GM13977 (cell line): ENCODE measurements at regions of chr2 and their contacts with region 1.

Region 1: GRCh38 chr2:182077451-182078142 is 91.9 kb downstream of the PPP1R1C start:
- DNase-seq: peak; percentile 23
- CTCF ChIP-seq: peak; percentile 70

Region 2: GRCh38 chr2:181058378-181059269 is 1019.0 kb before region 1 on chr2:
- in situ Hi-C with region 1: loop called (anchors 25 kb)
- DNase-seq: no peak
- CTCF ChIP-seq: peak; percentile 74

Region 3: DNA sequence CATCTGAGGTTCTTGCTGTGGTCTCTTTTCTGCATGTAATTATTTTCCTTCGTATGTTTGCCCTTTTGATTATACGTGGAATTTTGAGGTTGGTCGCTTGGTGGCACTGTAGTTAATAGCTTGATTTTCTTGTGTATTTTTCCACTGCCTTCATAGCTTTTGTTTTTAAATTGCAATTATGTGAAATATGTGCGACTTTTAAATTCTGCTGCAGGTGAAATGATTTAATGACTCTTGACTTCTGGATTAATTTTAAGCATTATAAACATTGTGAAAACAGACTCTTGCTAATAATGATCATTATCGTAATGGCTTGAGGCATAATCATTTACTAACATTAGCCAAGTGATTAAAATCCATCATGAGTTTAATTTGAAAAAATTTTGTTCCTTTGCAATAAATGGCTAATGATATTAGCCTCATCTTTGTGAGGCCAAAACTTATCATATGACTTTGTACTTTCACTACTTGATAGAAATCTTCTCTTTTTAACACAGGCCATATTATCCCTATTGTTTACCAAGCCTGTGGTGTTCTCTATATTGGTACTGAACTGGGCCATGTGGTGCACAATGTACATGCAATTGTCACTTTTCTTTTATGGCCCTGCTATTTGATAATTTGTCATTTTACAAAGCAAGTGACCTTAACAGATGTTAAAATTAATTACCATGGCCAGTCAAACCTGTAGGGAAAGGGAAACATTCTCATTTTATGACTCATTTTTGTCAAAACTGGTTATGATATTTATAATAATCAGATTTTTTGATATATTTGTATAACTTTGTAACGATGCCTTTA is 334.5 kb before region 1 on chr2:
- in situ Hi-C with region 1: loop called (anchors 10 kb)
- DNase-seq: peak; percentile 36
- CTCF ChIP-seq: peak; percentile 68

Region 4: DNA sequence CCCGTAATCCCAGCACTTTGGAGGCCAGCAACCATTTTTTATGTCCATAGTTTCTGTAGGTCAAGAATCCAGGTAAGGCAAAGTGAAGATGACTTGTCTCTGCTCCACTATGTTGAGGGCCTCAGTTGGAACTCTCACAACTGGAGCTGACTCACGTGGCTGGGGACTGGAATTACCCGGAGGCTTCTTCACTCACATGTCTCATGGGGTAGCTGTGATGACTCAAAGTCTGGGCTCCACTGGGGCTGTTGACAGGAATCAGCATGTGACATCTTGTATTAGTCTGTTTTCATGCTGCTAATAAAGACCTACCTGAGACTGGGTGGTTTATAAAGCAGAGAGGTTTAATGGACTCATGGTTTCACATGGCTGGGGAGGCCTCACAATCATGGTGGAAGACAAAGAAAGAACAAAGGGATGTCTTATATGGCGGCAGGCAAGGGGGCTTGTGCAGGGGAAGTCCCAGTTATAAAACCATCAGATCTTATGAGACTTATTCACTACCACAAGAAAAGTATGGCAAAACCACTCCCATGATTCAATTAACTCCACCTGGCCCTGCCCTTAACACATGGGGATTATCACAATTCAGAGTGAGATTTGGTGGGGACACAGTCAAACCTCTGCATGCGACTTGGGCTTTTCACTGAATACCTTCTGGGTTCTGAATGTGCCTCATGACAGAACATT is 99.8 kb before region 1 on chr2:
- in situ Hi-C with region 1: loop called (anchors 10 kb)
- DNase-seq: no peak
- CTCF ChIP-seq: no peak